Right ventricle myocardium inferior (tissue), 1 donor: ENCODE measurements at regions of chr3 and their contacts with region 1.

Region 1: DNA sequence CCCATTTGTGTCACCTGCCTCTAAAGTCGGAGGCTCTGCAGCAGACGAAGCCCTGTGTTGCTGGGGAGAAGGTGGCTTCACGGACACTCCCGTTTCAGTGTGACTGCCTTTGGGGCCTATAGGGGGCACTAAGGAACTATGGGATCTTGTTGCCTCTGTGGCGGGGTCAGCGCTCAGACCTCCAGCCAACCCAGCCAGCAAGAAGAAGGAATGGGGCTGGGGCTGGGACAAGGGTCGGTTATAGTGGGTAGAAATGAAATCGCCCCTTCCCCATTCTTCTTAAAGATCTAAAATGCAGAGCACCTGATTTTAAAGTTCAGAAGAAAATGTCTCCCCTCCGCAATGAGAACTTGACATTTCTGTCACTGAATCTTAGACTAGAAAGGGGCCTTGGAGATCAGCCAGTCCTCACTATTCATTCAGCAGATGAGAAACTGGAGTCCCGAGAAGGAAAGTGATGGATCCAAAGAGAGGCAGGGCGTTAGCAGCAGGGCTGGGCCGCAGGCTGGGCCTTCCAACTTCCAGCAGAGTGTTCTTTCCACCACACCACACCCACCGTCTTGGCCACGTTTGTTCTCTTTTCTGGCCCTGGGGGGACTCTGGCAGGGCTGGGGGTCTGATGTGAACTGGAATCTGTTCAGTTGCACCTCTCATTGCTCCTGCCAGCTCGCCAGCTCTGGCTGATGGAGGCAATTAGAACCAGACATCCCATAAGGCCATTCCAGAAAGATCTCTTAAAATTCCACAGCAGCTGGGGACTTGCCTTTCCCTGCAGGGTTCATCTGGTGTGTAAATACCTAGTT is 195.4 kb downstream of the OPA1 start:
- DNase-seq: peak; percentile 70
- ATAC-seq: peak; percentile 87

Region 2: GRCh38 chr3:193732391-193732790 is 56.0 kb before region 1 on chr3:
- intact Hi-C with region 1: no loop called
- DNase-seq: no peak
- ATAC-seq: no peak

Region 3: DNA sequence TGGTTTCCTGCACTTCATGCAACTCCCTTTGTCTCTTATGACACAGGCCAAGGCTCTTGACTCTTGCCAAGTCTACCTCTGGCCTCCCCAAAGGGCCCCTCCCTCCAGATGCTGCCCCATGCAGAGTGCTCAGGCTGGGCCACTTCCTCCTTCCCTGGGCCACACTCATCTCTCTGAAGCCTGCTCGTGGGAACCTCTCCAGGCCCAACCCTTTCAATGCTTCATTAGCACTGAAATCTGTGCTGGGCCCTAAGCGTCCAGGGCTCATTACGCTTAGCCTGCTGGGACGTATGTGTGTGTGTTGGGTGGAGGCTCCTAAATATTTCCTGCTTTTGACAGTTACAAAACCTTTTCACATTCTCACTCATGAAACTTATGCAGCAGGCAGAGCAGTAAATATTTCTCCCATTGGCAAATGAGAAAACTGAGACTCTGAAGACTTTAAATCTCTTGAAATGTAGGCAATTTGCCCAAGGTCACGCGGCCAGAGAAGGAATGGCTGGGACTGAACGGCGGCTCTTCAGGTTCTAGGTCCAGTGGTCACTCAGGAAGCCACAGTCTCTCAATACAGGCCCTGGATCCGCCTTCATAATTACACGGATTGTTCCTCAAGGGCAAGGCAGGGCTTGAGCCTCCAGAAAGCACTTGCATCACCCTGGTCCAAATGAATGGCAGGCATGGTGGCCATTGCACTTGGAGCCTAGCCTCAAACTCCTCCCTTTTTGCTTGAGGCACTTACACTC is 105.9 kb after region 1 on chr3:
- intact Hi-C with region 1: loop called (anchors 10 kb)
- DNase-seq: no peak
- ATAC-seq: peak; percentile 46

Region 4: DNA sequence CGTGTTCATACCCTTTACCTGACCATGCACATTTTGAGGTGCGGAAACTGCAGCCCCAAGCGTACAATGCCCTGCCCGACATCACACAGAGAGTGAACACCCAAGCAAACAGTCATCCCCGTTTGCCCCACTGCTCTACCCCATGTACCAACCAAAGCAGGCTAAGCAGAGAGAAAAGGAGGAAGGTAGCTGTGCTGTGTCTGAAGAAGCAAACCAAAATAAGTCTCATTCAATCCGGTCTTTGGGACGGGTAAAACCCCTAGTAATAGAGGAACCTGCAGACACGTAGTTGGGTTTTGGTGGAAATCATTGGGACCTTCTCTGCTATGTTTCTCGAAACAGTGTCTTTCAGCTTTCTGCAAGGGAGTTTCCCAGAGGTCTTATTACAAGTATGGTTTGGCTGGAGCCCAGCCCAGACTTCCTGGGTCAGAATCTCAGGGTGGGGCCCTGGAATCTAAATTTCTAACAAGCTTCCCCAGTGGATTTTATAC is 182.9 kb after region 1 on chr3:
- intact Hi-C with region 1: loop called (anchors 5 kb)
- DNase-seq: no peak
- ATAC-seq: no peak

Region 5: GRCh38 chr3:194003125-194004057 is 215.0 kb after region 1 on chr3:
- intact Hi-C with region 1: loop called (anchors 2 kb)
- DNase-seq: peak; percentile 94
- ATAC-seq: peak; percentile 91